ENCODE measurements at regions of chr1 and their contacts with region 1.

Region 1: DNA sequence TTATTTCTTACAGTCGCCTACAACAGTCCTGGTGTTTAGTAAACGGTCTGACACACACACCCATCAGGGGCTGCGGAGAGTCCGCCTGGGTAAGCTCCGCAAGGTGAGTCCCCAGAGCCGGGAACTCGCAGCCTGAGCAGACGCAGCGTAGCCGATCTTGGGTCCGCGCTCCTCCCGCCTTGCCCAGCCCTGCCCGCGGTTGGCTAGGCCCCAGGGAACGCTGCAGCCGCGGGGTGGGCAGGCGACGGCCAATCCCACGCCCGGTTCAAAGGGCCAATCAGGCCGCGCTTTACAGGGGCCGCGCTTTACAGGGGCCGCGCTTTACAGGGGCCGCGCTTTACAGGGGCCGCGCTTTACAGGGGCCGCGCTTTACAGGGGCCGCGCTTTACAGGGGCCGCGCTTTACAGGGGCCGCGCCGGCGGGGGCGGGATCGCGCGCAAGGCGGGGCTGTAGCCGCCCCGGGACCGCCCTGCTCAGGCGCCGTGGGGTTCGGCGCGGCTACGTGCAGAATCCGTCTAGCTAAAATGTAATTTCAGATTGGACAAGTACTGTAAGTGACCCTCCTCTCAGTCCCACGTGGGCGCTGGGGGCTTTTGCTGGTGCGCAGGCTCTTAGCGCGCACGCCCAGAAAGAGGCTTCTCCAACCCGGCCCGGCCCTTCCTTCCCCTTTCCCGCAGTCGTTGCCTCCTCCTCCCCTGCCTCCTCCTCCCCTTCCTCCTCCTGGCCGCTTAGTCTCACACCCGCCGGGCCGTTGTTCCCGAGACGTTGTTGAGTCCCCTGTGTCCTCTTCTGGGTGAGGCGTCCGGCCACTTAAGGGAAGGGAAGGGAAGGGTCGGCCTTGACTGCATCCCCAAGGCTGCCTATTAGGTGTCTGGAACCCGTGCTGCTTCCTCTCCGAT is at the start of gene FGGY:
- DNase-seq: peak in 1 of 2 donors; percentile 98
- H3K4me3 ChIP-seq: peak within 1 kb of the TSS; percentile 55 to 64
- H3K27ac ChIP-seq: peak within 1 kb of the TSS; percentile 97
- H3K4me1 ChIP-seq: peaks cover 31% of the 10 kb centered on the region
- H3K27me3 ChIP-seq: no peaks in the 10 kb centered on the region
- CTCF ChIP-seq: no peak
- POLR2A ChIP-seq: peak in 1 of 2 donors; percentile 72
- total RNA-seq, gene FGGY: 11.8 TPM

Region 2: GRCh38 chr1:58896246-58897183 is 400.1 kb before region 1 on chr1:
- intact Hi-C with region 1: loop called (anchors 10 kb)
- DNase-seq: no peak
- H3K4me3 ChIP-seq: no peak overlapping the region
- H3K27ac ChIP-seq: peak overlapping the region; percentile 76
- H3K4me1 ChIP-seq: peaks cover 51% of the 10 kb centered on the region
- H3K27me3 ChIP-seq: no peaks in the 10 kb centered on the region
- CTCF ChIP-seq: no peak
- POLR2A ChIP-seq: no peak

Measured in vagina (tissue), 2 donors.